ENCODE measurements at regions of chr6 and their contacts with region 1.

Region 1: DNA sequence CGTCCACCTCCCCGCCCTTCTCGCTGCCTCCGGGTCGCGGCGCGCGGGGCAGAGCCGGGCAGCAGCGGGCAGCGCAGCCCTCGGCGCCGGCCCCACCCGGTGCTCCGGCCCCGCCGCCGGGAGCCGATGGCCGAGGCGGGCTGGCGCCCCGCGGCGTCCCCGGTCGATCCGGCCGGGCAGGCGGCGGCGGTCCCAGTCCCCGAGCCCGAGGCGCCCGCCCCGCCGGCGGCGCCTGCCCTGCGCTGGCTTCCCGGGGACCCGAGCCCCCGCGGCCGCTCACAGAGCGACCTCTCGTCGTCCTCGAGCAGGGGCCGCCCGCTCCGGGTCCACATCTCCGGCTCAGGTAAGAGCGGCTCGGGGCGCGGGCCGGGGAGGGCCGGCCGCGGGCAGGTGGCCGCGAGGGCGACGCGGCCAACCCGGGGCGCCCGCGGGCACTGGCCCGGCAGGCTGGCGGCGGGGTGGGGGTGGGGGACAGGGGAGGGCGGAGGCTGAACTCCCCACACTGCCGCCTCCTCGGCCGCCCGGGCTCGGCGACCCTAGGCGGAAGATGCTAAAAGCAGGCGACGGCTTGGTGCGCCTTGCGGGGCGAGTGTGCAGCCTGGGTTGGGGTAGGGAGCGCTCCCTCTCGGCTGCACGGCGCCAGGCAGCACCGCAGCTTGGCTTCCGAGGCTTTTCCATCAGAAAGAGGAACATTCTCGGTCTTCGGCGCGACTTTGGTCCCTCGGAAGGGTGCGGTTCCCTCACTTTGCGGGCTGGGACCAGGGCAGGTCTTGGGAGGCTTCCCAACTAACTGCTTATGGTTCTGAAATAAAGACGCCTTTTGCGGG is 25.6 kb upstream of the FUCA2 start:
- DNase-seq: peak; percentile 75
- ATAC-seq: peak; percentile 65
- H3K4me3 ChIP-seq: peak overlapping the region; percentile 28 to 67 (median 56)
- H3K4me3 Mint-ChIP-seq: peak overlapping the region; percentile 86
- H3K27ac ChIP-seq: no peak overlapping the region
- H3K27ac Mint-ChIP-seq: peak overlapping the region; percentile 78
- H3K4me1 ChIP-seq: peaks cover 22 to 31% of the 10 kb centered on the region in 2 donors
- H3K4me1 Mint-ChIP-seq: peaks cover 29% of the 10 kb centered on the region
- H3K27me3 ChIP-seq: no peaks in the 10 kb centered on the region
- H3K27me3 Mint-ChIP-seq: no peaks in the 10 kb centered on the region
- CTCF ChIP-seq: peak; percentile 22

Region 2: DNA sequence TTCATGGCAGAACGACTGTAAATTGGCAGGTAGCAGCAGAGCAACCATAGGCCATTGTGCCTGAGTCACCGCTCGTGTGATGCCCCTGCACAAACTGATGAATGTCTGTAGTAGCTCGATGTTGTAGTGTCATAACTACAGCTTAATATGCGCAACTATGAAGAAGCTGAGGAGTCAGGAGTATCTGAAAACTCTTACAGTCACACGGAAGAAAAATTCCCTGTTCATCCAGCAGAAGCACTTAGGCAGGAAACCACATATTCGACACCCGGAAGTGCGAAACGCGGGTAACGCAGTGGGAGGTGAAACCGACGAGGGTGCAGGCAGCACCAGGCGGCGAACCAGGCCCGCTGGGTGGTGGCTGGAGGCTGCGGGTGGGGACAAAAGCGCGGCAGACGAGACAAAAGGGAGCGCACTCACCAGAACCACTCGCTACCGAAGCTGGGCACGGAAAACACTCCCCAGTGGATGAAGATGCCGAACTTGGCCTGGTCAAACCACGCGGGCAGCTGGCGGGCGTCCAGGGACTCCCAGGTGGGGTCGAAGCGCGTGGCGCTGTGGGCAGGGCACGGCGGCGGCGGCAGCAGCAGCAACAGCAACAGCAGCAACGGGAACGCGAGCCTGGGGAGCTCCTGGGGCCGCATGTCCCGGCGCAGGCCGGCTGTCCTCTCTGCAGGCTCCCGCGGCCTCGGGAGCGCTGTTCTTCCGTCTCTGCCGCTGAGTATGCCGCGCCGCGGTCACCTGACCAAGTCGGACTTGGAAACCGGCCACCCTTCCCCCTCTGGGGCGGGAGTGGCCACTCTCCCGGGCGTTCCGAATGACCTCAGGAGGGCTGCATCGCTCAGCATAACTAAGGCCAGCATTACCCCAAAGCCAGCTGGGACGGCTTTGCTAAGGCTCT is 25.8 kb before region 1 on chr6 and contains the start of gene FUCA2:
- CTCF ChIA-PET with region 1: interaction called, 26 read pairs
- POLR2A ChIA-PET with region 1: no interaction called
- intact Hi-C with region 1: loop called (anchors 2 kb)
- DNase-seq: peak; percentile 69
- ATAC-seq: peak; percentile 65
- H3K4me3 ChIP-seq: peak within 1 kb of the TSS; percentile 46 to 74 (median 64)
- H3K4me3 Mint-ChIP-seq: peak within 1 kb of the TSS; percentile 98
- H3K27ac ChIP-seq: peak within 1 kb of the TSS; percentile 47 to 72
- H3K27ac Mint-ChIP-seq: peak within 1 kb of the TSS; percentile 95
- H3K4me1 ChIP-seq: peaks cover 15 to 19% of the 10 kb centered on the region in 2 donors
- H3K4me1 Mint-ChIP-seq: peaks cover 33% of the 10 kb centered on the region
- H3K27me3 ChIP-seq: no peaks in the 10 kb centered on the region
- H3K27me3 Mint-ChIP-seq: no peaks in the 10 kb centered on the region
- CTCF ChIP-seq: no peak
- total RNA-seq, gene FUCA2: 8.3 and 8.8 TPM in 2 replicates

Region 3: DNA sequence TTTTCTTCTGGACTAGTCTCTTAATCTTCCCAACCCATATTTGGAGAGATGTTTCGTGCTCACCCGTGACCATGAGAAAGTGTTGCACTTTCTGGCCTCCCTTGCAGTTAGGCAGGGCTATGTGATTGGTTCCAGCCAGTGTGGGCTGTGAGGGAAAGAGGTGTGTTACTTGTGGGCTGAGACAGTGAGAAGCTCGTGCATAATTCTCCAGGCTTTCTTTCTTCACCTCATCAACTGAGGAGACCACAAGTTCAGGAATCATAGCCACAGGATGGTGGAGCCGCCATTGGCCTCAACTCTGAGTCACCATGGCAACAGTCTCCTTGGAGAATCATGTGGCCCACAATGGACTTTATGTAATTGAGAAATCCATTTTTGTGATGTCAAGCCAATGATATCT is 32.0 kb after region 1 on chr6:
- CTCF ChIA-PET with region 1: no interaction called
- POLR2A ChIA-PET with region 1: no interaction called
- intact Hi-C with region 1: loop called (anchors 5 kb)
- DNase-seq: no peak
- ATAC-seq: no peak
- H3K4me3 ChIP-seq: no peak overlapping the region
- H3K4me3 Mint-ChIP-seq: no peak overlapping the region
- H3K27ac ChIP-seq: no peak overlapping the region
- H3K27ac Mint-ChIP-seq: no peak overlapping the region
- H3K4me1 ChIP-seq: peaks cover 0 to 4% of the 10 kb centered on the region in 2 donors
- H3K4me1 Mint-ChIP-seq: peaks cover 6% of the 10 kb centered on the region
- H3K27me3 ChIP-seq: no peaks in the 10 kb centered on the region
- H3K27me3 Mint-ChIP-seq: no peaks in the 10 kb centered on the region
- CTCF ChIP-seq: no peak

Measured in B cell (primary cell).